ENCODE measurements at regions of chr18 and their contacts with region 1.

Region 1: GRCh38 chr18:2571200-2572143 is at the starts of genes METTL4 and NDC80:
- DNase-seq: peak; percentile 70 to 90 (median 82)
- ATAC-seq: peak; percentile 87
- H3K4me3 ChIP-seq: peak within 1 kb of the TSS; percentile 88
- H3K4me3 Mint-ChIP-seq: peak within 1 kb of the TSS; percentile 96 to 100 (median 99)
- H3K27ac ChIP-seq: peak within 1 kb of the TSS; percentile 97
- H3K27ac Mint-ChIP-seq: peak within 1 kb of the TSS; percentile 98 to 100 (median 100)
- H3K4me1 ChIP-seq: peaks cover 10 to 13% of the 10 kb centered on the region in 2 donors
- H3K4me1 Mint-ChIP-seq: peaks cover 38 to 63% (median 59%) of the 10 kb centered on the region in 7 donors
- H3K27me3 ChIP-seq: no peaks in the 10 kb centered on the region
- H3K27me3 Mint-ChIP-seq: no peaks in the 10 kb centered on the region
- total RNA-seq, gene METTL4: 13.8 to 32.5 (median 22.8) TPM
- total RNA-seq, gene NDC80: 2.4 to 53.6 (median 2.7) TPM

Region 2: DNA sequence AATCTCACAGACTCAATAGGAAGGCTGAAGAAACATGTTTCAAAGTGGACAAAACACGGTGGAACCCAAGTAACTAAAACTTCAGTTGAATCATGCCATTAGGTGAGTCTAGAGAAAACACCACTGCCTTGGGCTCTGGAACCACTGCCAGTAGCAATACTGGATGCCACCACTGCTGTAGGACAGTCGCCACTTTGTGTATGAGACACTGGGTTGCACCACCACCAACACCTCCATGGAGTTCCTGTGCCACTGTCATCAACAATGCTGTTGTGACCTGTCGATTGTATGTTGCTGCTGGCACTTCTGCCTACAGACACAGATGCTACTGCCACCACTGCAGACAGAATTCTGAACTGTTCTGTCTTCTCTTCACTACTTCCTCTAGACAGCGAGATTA is 686.8 kb before region 1 on chr18:
- CTCF ChIA-PET with region 1: no interaction called
- POLR2A ChIA-PET with region 1: no interaction called
- intact Hi-C with region 1: no loop called
- DNase-seq: no peak
- ATAC-seq: no peak
- H3K4me3 ChIP-seq: no peak overlapping the region
- H3K4me3 Mint-ChIP-seq: no peak overlapping the region
- H3K27ac ChIP-seq: no peak overlapping the region
- H3K27ac Mint-ChIP-seq: no peak overlapping the region
- H3K4me1 ChIP-seq: no peaks in the 10 kb centered on the region
- H3K4me1 Mint-ChIP-seq: no peaks in the 10 kb centered on the region
- H3K27me3 ChIP-seq: no peaks in the 10 kb centered on the region
- H3K27me3 Mint-ChIP-seq: peaks cover 0 to 5% (median 0%) of the 10 kb centered on the region in 5 donors

Region 3: DNA sequence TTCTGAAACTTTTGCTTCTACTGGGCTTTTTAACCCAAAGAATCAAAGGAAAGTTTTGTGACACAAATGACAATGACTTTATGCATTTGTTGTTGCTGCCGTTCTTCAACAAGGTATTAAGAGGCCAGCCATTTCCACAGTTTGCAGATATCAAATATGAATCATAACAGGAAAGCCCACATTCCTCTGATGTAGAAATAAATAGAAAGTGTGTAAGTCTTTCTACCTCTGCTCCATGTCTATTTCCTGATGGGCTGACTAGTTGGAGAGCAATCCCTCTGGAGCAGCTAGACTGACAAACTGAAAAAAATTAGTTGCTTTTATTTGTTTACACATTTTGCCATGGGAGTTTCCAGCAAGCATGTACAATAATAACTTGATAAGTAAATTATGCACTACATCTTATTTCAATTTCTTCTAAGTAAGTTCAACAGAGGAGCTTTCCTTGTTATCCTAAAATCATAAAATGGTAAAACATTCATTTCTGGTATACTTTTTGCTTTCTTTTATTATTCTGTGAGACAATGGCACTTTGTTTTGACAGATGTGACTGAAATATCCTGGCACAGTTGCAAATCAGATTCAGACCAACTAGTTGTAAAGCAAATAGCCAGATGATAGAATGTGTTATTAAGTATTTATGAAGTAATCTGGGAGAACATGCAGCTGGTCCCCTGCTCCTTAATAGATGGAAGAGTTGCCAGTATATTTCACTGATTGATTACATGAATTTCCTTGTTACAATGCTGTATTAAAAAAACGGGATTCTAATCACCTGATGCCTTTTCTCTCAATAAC is 266.9 kb before region 1 on chr18:
- CTCF ChIA-PET with region 1: no interaction called
- POLR2A ChIA-PET with region 1: no interaction called
- intact Hi-C with region 1: no loop called
- DNase-seq: no peak
- ATAC-seq: no peak
- H3K4me3 ChIP-seq: no peak overlapping the region
- H3K4me3 Mint-ChIP-seq: no peak overlapping the region
- H3K27ac ChIP-seq: no peak overlapping the region
- H3K27ac Mint-ChIP-seq: no peak overlapping the region
- H3K4me1 ChIP-seq: no peaks in the 10 kb centered on the region
- H3K4me1 Mint-ChIP-seq: no peaks in the 10 kb centered on the region
- H3K27me3 ChIP-seq: no peaks in the 10 kb centered on the region
- H3K27me3 Mint-ChIP-seq: peaks cover 22 to 46% (median 44%) of the 10 kb centered on the region in 5 donors

Region 4: DNA sequence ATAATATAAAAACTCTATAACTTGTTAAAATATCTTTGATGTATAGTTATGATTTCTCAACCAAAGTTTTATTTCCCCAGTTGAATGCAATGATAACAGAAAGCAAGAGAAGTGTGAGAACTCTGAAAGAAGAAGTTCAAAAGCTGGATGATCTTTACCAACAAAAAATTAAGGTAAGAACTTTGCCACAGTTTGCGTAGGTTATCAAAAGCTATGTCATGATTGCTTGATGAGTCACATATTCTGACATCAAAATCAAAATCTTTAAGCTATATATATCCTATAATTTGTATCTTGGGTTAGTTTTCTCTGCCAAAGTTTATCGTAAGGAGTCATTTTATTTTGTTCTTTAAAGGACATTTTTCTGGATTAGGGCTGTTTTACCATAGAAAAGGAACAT is 34.9 kb after region 1 on chr18:
- CTCF ChIA-PET with region 1: interaction called, 6 read pairs
- POLR2A ChIA-PET with region 1: interaction called, 30 read pairs
- intact Hi-C with region 1: loop called (anchors 1 kb)
- DNase-seq: peak in 6 of 9 donors; percentile 42 to 65 (median 53)
- ATAC-seq: peak; percentile 73
- H3K4me3 ChIP-seq: no peak overlapping the region
- H3K4me3 Mint-ChIP-seq: peak overlapping the region; percentile 16 to 84 (median 70)
- H3K27ac ChIP-seq: peak overlapping the region; percentile 73
- H3K27ac Mint-ChIP-seq: peak overlapping the region; percentile 79 to 94 (median 87)
- H3K4me1 ChIP-seq: peaks cover 28 to 35% of the 10 kb centered on the region in 2 donors
- H3K4me1 Mint-ChIP-seq: peaks cover 22 to 79% (median 64%) of the 10 kb centered on the region in 7 donors
- H3K27me3 ChIP-seq: no peaks in the 10 kb centered on the region
- H3K27me3 Mint-ChIP-seq: no peaks in the 10 kb centered on the region

Region 5: DNA sequence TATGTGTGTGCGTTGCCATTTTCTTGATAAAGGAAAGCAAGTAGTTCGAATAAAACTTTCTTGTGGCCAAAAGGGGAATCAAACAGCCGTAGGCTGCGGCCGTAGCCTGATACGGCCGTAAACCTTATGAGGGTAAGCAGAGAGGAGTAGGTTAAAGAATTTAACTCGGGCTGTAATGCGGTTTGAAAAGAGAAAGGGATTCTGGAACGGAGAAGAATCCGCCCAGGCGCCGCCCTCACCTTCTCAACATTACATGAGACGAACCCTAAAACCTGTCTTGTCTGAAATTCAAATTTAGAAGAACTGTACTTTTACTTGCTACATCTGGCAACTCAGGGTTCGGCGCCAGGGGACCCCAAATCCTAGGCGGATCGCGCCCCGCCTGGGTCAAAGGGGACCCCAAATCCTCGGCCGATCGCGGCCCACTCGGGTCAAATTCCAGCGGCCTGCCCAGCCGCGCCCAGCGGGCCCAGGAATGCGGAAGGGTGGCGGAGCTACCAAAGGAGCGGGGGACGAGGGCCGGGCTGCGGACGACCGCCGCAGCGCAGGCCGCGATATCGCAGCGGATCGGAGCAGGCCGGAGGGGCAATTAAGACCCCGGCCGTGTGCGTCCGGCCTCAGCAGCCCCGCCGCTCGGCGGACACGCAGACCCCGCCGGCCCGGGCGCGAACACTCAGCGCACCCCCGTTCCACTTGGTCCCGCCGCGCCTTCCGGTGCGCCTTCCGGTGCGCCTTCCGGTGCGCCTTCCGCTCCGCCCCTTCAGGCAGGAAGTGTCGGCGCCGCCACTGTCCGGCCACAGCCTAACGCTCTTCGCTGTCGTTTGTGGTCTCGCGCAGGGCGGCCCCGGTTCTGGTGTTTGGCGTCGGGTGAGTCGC is 690.1 kb after region 1 on chr18 and contains the start of gene MYL12B:
- CTCF ChIA-PET with region 1: no interaction called
- POLR2A ChIA-PET with region 1: no interaction called
- intact Hi-C with region 1: loop called in 1 of 2 experiments (anchors 5 kb)
- DNase-seq: peak; percentile 72 to 88 (median 84)
- ATAC-seq: peak; percentile 87
- H3K4me3 ChIP-seq: peak within 1 kb of the TSS; percentile 81
- H3K4me3 Mint-ChIP-seq: peak within 1 kb of the TSS; percentile 87 to 100 (median 96)
- H3K27ac ChIP-seq: peak within 1 kb of the TSS; percentile 96
- H3K27ac Mint-ChIP-seq: peak within 1 kb of the TSS; percentile 95 to 100 (median 99)
- H3K4me1 ChIP-seq: peaks cover 54 to 66% of the 10 kb centered on the region in 2 donors
- H3K4me1 Mint-ChIP-seq: peaks cover 48 to 87% (median 83%) of the 10 kb centered on the region in 7 donors
- H3K27me3 ChIP-seq: no peaks in the 10 kb centered on the region
- H3K27me3 Mint-ChIP-seq: no peaks in the 10 kb centered on the region
- total RNA-seq, gene MYL12B: 140 to 300 (median 169) TPM

Measured in naive thymus-derived CD4-positive, alpha-beta T cell (primary cell).